Sigmoid colon (tissue), 7 donors: ENCODE measurements at regions of chr12 and their contacts with region 1.

Region 1: DNA sequence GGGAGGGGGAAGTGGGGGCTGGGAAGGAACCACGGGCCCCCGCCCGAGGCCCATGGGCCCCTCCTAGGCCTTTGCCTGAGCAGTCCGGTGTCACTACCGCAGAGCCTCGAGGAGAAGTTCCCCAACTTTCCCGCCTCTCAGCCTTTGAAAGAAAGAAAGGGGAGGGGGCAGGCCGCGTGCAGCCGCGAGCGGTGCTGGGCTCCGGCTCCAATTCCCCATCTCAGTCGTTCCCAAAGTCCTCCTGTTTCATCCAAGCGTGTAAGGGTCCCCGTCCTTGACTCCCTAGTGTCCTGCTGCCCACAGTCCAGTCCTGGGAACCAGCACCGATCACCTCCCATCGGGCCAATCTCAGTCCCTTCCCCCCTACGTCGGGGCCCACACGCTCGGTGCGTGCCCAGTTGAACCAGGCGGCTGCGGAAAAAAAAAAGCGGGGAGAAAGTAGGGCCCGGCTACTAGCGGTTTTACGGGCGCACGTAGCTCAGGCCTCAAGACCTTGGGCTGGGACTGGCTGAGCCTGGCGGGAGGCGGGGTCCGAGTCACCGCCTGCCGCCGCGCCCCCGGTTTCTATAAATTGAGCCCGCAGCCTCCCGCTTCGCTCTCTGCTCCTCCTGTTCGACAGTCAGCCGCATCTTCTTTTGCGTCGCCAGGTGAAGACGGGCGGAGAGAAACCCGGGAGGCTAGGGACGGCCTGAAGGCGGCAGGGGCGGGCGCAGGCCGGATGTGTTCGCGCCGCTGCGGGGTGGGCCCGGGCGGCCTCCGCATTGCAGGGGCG is at the start of gene GAPDH:
- DNase-seq: peak; percentile 97
- H3K4me3 ChIP-seq: peak within 1 kb of the TSS; percentile 76 to 91 (median 88)
- H3K27ac ChIP-seq: peak within 1 kb of the TSS; percentile 97 to 98 (median 98)
- H3K4me1 ChIP-seq: peaks cover 0 to 60% (median 47%) of the 10 kb centered on the region in 4 donors
- H3K27me3 ChIP-seq: no peaks in the 10 kb centered on the region
- CTCF ChIP-seq: no peak
- EP300 ChIP-seq: peak in 1 of 4 donors; percentile 21
- POLR2A ChIP-seq: peak; percentile 96 to 98
- total RNA-seq, gene GAPDH: 1,653 to 2,501 (median 2,098) TPM

Region 2: DNA sequence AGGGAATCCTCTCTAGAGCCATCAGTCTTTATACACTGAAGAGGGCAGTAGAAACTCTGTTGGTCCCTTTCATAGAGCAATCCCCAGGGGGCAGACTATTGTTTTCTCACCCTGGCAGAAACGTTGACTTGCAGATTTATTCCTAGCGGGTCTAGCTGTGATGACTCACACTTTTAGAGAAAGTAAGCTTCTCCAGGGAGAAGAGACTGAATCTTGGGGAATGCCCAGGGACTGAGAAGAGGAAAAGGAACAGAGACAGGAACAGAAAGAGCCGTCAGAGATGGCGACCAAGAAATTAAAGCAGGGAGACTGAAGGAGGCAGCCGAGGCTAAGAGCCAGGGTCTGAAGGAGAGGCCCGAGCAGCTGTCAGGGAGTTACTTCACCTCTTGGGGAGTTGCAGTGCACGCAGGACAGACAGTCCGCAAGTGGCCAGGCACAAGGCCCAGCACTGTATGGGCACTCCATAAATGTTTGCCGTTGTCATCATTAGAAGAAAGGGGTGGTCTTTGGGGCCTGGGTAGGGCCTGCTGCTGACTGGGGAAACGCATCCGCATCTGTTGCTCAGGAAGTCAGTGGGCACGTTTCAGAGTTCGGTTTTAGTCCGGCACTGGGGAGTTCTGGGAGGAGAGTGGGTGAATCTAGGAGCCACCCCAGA is 210.6 kb before region 1 on chr12:
- intact Hi-C with region 1: loop called (anchors 2 kb)
- DNase-seq: peak; percentile 89
- H3K4me3 ChIP-seq: peak overlapping the region in 2 of 4 donors; percentile 10 to 13
- H3K27ac ChIP-seq: peak overlapping the region; percentile 77 to 98 (median 92)
- H3K4me1 ChIP-seq: peaks cover 0 to 65% (median 56%) of the 10 kb centered on the region in 4 donors
- H3K27me3 ChIP-seq: no peaks in the 10 kb centered on the region
- CTCF ChIP-seq: peak; percentile 41 to 73 (median 48)
- EP300 ChIP-seq: no peak
- POLR2A ChIP-seq: no peak

Region 3: DNA sequence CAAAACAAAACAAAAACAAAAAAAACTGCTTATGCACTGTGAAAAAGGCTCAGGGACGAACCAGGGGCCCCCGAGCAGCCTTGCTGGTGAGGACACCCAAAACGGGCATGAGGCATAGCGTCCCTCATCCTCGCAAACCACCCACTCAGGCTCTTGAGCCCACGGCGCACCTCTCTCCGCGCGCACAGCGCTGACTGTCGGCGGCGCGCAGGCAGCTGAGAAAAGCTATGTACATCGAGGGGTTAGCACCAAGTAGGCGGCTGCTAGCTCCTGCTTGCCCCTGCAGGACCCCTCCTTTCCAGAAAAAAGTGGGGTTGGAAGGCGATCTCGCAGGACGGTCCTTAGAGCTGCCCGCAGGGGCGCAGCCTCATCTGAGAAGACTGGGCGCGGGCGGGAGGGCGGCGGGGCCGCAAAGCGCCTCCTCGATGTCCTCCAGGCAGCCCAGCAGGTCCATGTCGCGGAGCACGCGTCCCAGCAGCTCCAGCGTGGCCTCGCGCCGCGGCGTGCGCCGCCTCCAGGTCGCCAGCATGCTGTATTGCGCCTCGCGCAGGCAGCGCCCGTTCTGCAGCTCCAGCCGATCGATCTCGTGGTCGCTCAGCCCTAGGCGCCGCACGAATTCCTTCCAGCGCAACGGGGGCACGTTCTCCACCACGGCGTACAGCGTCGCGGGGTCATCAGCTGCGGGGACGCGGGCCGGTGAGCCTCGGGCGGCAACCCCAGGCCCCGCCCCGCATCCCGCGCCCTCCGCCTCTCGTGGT is 205.0 kb before region 1 on chr12:
- intact Hi-C with region 1: loop called (anchors 1 kb)
- DNase-seq: no peak
- H3K4me3 ChIP-seq: no peak overlapping the region
- H3K27ac ChIP-seq: peak overlapping the region; percentile 93 to 98 (median 97)
- H3K4me1 ChIP-seq: peaks cover 0 to 81% (median 63%) of the 10 kb centered on the region in 4 donors
- H3K27me3 ChIP-seq: no peaks in the 10 kb centered on the region
- CTCF ChIP-seq: no peak
- EP300 ChIP-seq: no peak
- POLR2A ChIP-seq: no peak

Region 4: GRCh38 chr12:6423267-6424007 is 110.7 kb before region 1 on chr12:
- intact Hi-C with region 1: loop called (anchors 2 kb)
- DNase-seq: peak; percentile 96
- H3K4me3 ChIP-seq: no peak overlapping the region
- H3K27ac ChIP-seq: peak overlapping the region; percentile 43 to 67 (median 62)
- H3K4me1 ChIP-seq: peaks cover 0 to 22% (median 19%) of the 10 kb centered on the region in 4 donors
- H3K27me3 ChIP-seq: no peaks in the 10 kb centered on the region
- CTCF ChIP-seq: peak; percentile 85 to 95 (median 92)
- EP300 ChIP-seq: peak in 1 of 4 donors; percentile 16
- POLR2A ChIP-seq: no peak

Region 5: GRCh38 chr12:6470375-6471163 is 63.5 kb before region 1 on chr12 and contains the start of gene VAMP1:
- intact Hi-C with region 1: loop called (anchors 2 kb)
- DNase-seq: peak; percentile 99
- H3K4me3 ChIP-seq: peak within 1 kb of the TSS; percentile 63 to 81 (median 71)
- H3K27ac ChIP-seq: peak within 1 kb of the TSS; percentile 89 to 92 (median 90)
- H3K4me1 ChIP-seq: peaks cover 0 to 38% (median 33%) of the 10 kb centered on the region in 4 donors
- H3K27me3 ChIP-seq: no peaks in the 10 kb centered on the region
- CTCF ChIP-seq: peak in 1 of 4 experiments; percentile 18
- EP300 ChIP-seq: no peak
- POLR2A ChIP-seq: peak; percentile 98 to 99
- total RNA-seq, gene VAMP1: 11.5 to 44.0 (median 17.2) TPM

Region 6: GRCh38 chr12:6493497-6494257 is 40.4 kb before region 1 on chr12 and contains the start of gene NCAPD2:
- intact Hi-C with region 1: loop called (anchors 1 kb)
- DNase-seq: peak; percentile 98
- H3K4me3 ChIP-seq: peak within 1 kb of the TSS; percentile 60 to 79 (median 70)
- H3K27ac ChIP-seq: peak within 1 kb of the TSS; percentile 94 to 97 (median 96)
- H3K4me1 ChIP-seq: peaks cover 0 to 27% (median 20%) of the 10 kb centered on the region in 4 donors
- H3K27me3 ChIP-seq: no peaks in the 10 kb centered on the region
- CTCF ChIP-seq: peak; percentile 50 to 81 (median 74)
- EP300 ChIP-seq: no peak
- POLR2A ChIP-seq: no peak
- total RNA-seq, gene NCAPD2: 11.8 to 89.5 (median 12.6) TPM

Region 7: GRCh38 chr12:6554168-6555017 is 20.3 kb after region 1 on chr12:
- intact Hi-C with region 1: loop called (anchors 1 kb)
- DNase-seq: peak; percentile 89
- H3K4me3 ChIP-seq: peak overlapping the region; percentile 66 to 98 (median 90)
- H3K27ac ChIP-seq: peak overlapping the region; percentile 88 to 95 (median 94)
- H3K4me1 ChIP-seq: peaks cover 0 to 68% (median 62%) of the 10 kb centered on the region in 4 donors
- H3K27me3 ChIP-seq: no peaks in the 10 kb centered on the region
- CTCF ChIP-seq: peak in 3 of 4 experiments; percentile 30 to 51 (median 34)
- EP300 ChIP-seq: no peak
- POLR2A ChIP-seq: no peak

Region 8: DNA sequence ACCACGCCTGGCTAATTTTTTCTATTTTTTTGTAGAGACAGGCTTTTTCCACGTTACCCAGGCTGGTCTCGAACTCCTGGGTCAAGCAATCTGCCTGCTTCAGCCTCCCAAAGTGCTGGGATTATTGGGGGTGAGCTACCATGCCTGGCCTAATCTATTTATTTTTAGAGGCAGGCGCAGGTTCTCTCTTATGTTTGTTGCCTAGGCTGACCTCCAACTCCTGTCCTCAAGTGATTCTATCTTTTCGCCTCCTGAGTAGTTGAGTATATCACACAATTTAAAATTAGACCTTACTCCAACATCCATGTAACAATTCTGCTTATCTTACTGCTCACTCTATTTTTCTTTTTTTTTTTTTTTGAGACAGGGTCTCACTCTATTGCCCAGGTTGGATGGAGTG is 119.9 kb after region 1 on chr12:
- intact Hi-C with region 1: no loop called
- DNase-seq: no peak
- H3K4me3 ChIP-seq: no peak overlapping the region
- H3K27ac ChIP-seq: no peak overlapping the region
- H3K4me1 ChIP-seq: no peaks in the 10 kb centered on the region
- H3K27me3 ChIP-seq: no peaks in the 10 kb centered on the region
- CTCF ChIP-seq: no peak
- EP300 ChIP-seq: no peak
- POLR2A ChIP-seq: no peak

Region 9: DNA sequence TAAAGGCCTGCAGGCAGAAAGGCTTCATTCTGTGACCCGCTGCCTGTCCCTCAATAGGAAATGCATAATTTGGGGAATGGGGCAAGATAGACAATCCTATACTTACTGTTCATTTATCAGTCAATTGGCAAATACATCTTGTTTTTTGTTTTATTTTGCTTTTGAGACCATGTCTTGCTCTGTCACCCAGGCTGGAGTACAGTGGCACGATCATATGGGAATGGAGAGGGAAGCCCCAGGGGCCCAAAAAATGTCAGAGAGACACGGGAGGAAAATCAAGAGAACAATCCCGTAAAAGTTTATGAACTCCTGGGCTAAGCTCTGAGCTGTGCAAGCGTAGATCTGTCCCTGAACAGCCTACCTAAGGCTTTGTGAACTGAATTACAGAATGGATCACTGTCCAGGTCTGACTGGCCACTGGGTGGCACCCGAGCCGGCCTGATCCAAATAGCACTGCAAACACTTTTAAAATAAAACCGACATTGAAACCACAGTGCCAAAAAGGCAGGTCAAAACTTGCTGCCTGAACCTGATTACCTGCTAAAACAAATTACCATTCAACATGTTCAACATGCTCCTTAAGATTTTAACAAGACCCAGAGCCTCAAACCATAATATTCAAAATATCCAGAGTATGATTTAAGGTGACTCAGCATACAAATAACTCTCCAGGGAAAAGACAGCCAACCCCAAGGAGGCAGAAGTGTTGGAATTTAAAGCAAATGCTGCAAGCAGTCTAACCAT is 201.5 kb after region 1 on chr12:
- intact Hi-C with region 1: no loop called
- DNase-seq: peak; percentile 81
- H3K4me3 ChIP-seq: no peak overlapping the region
- H3K27ac ChIP-seq: peak overlapping the region; percentile 42 to 67 (median 60)
- H3K4me1 ChIP-seq: peaks cover 0 to 10% (median 5%) of the 10 kb centered on the region in 4 donors
- H3K27me3 ChIP-seq: no peaks in the 10 kb centered on the region
- CTCF ChIP-seq: peak; percentile 53 to 73 (median 71)
- EP300 ChIP-seq: no peak
- POLR2A ChIP-seq: no peak